ENCODE measurements at regions of chr13 and their contacts with region 1.

Region 1: DNA sequence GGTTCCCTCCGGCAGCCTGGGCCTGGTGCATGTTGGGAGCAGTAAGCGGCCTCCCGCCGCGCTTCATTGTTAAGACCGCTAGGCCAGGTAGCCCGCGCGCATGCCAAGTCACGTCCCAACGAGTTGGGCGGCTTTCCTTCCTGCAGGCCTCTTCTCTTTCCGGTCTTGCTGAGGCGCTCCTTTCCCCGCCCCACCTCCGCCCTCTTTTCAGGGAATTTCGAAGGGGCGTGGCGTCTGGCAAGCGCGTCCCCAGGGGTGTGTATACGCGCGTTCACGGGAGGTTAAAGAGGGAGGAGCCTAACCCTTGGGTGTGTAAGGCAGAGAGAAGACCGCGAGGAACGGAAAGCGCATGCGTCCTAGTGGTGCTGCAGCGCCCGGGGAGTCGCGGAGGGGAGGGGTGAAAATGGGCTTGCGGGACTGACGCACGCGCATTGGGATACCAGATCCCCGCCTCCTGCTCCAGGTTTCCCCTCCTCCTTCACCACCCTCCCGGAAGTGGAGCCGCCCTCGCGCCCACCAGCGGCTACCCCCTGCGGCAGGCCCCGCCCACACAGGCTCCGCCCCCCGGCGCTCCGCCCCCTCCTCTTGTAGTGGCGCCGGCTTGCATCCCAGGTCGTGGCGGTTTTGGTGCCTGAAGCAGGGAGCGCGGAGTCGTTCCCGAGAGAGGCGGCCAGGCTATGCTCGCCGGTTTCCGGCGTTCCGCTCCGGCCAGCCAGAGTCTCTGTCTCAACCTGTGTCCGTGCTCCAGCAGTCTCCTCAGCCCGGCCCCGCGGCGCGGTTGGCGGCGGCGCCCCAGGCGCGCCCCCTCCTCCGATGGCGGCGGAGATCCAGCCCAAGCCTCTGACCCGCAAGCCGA is at the start of gene WDFY2:
- DNase-seq: peak; percentile 99
- ATAC-seq: peak; percentile 86
- H3K4me3 ChIP-seq: peak within 1 kb of the TSS; percentile 95
- H3K27ac ChIP-seq: peak within 1 kb of the TSS; percentile 64
- H3K4me1 ChIP-seq: peaks cover 9% of the 10 kb centered on the region; the same call in 1 of the 2 replicates
- H3K27me3 ChIP-seq: no peaks in the 10 kb centered on the region
- CTCF ChIP-seq: peak in 1 of 3 experiments; percentile 24; a peak in 2 of 6 replicates
- EP300 ChIP-seq: no peak
- POLR2A ChIP-seq: peak; percentile 72
- RAD21 ChIP-seq: peak; percentile 3; the same call in 1 of the 2 replicates
- polyA plus RNA-seq, gene WDFY2: 2.1 to 2.7 TPM

Region 2: GRCh38 chr13:51047434-51048165 is 536.5 kb before region 1 on chr13:
- CTCF ChIA-PET with region 1: no interaction called
- POLR2A ChIA-PET with region 1: no interaction called
- RAD21 ChIA-PET with region 1: no interaction called
- SMC1A ChIA-PET with region 1: no interaction called
- in situ Hi-C with region 1: no loop called
- intact Hi-C with region 1: no loop called
- DNase-seq: no peak
- ATAC-seq: no peak
- H3K4me3 ChIP-seq: no peak overlapping the region
- H3K27ac ChIP-seq: no peak overlapping the region
- H3K4me1 ChIP-seq: no peaks in the 10 kb centered on the region
- H3K27me3 ChIP-seq: no peaks in the 10 kb centered on the region; a peak in 1 of 4 replicates
- CTCF ChIP-seq: peak in 2 of 3 experiments; percentile 8 to 9; a peak in 1 of 6 replicates
- EP300 ChIP-seq: no peak
- POLR2A ChIP-seq: no peak
- RAD21 ChIP-seq: 0 out of 2 replicates have a peak, but pooled peaks have one; percentile 5

Region 3: DNA sequence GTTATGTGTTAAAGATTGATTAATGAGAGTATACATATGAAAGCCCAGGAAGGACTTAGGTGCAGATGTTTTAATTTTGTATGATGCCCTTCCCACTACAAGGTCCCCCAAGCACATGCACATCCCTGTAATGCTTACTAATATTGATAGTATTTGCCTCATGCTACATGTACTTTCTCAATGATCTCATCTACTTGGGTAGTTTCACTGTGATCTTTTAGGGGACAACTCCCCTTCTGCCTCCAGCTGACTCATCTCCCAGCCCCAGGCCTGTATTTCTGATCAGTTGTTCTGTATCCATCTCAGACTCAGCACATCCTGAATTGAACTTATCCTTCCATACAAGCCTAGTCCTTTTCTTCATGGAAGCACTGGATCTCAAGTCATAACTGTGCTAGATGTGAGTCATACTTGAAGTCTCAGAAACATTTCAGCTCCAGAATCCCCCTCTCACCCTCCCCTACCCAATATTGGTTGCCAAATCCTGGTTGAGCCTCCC is 81.9 kb before region 1 on chr13:
- CTCF ChIA-PET with region 1: no interaction called
- POLR2A ChIA-PET with region 1: no interaction called
- RAD21 ChIA-PET with region 1: no interaction called
- SMC1A ChIA-PET with region 1: interaction called, 3 read pairs
- in situ Hi-C with region 1: no loop called
- intact Hi-C with region 1: loop called (anchors 2 kb)
- DNase-seq: peak; percentile 65
- ATAC-seq: peak; percentile 96
- H3K4me3 ChIP-seq: 0 out of 2 replicates have a peak overlapping the region, but pooled peaks have one; percentile 3
- H3K27ac ChIP-seq: peak overlapping the region; percentile 46; the same call in 1 of the 2 replicates
- H3K4me1 ChIP-seq: peaks cover 9% of the 10 kb centered on the region
- H3K27me3 ChIP-seq: no peaks in the 10 kb centered on the region
- CTCF ChIP-seq: no peak
- EP300 ChIP-seq: peak; percentile 72 to 78; a peak in 2 of 4 replicates
- POLR2A ChIP-seq: no peak
- RAD21 ChIP-seq: no peak

Region 4: GRCh38 chr13:51614350-51614786 is 30.3 kb after region 1 on chr13:
- CTCF ChIA-PET with region 1: interaction called, 5 read pairs
- POLR2A ChIA-PET with region 1: interaction called, 21 read pairs
- RAD21 ChIA-PET with region 1: interaction called, 16 read pairs
- SMC1A ChIA-PET with region 1: interaction called, 38 read pairs
- in situ Hi-C with region 1: no loop called
- intact Hi-C with region 1: no loop called
- DNase-seq: peak; percentile 56
- ATAC-seq: peak; percentile 71
- H3K4me3 ChIP-seq: peak overlapping the region; percentile 53
- H3K27ac ChIP-seq: peak overlapping the region; percentile 78
- H3K4me1 ChIP-seq: peaks cover 4% of the 10 kb centered on the region
- H3K27me3 ChIP-seq: no peaks in the 10 kb centered on the region
- CTCF ChIP-seq: no peak
- EP300 ChIP-seq: no peak
- POLR2A ChIP-seq: peak; percentile 83
- RAD21 ChIP-seq: 0 out of 2 replicates have a peak, but pooled peaks have one; percentile 1

Region 5: GRCh38 chr13:51659276-51660127 is 75.4 kb after region 1 on chr13:
- CTCF ChIA-PET with region 1: no interaction called
- POLR2A ChIA-PET with region 1: interaction called, 11 read pairs
- RAD21 ChIA-PET with region 1: interaction called, 3 read pairs
- SMC1A ChIA-PET with region 1: no interaction called
- in situ Hi-C with region 1: no loop called
- intact Hi-C with region 1: no loop called
- DNase-seq: no peak
- ATAC-seq: no peak
- H3K4me3 ChIP-seq: no peak overlapping the region
- H3K27ac ChIP-seq: no peak overlapping the region
- H3K4me1 ChIP-seq: no peaks in the 10 kb centered on the region
- H3K27me3 ChIP-seq: no peaks in the 10 kb centered on the region
- CTCF ChIP-seq: no peak
- EP300 ChIP-seq: no peak
- POLR2A ChIP-seq: no peak
- RAD21 ChIP-seq: no peak

Region 6: DNA sequence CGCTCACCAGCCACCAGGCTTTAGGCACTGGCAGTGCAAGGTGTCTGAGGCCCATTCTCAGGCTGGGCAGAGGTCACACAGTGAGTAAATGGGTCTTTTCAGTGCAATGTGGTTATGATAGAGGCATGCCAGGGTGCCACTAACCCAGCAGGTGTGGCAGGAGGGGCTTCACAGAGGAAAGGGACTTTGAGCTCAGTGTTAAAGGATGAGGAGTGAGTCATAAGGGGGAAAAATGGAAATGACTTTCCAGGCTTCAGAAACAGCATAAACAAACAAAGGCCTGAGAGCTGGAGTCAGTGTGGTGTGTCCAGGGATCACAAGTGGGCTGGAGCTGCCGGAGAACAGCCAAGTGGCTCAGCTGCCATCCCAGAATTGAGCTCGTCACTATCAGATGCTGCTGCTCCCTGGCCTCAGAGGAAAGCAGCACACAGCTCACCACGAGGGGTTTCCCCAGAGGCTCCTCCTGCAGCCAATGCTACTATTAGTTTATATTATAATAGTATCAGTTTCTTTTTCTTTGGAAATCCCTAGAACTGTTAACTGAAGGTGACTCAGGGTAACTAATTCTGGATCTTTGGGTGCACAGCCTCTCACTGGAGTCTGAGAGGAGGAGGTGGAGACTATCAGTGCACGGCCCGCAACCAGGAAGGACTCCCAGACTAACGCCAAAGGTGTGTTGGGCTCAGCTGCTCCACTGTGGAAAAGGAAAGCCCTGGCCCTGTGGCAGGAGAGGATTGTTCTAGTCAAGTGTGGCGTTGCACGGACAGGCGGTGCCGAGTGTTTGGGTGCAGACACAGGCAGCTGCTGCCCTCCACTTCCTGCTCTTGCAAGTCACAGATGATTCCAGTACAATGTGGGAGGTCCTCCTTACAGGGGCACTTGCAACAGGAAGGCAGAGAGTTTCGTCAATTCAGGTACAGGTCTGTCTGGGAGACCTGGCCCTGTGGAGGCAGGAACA is 180.4 kb after region 1 on chr13:
- CTCF ChIA-PET with region 1: interaction called, 9 read pairs
- POLR2A ChIA-PET with region 1: interaction called, 4 read pairs
- RAD21 ChIA-PET with region 1: interaction called, 29 read pairs
- SMC1A ChIA-PET with region 1: interaction called, 11 read pairs
- in situ Hi-C with region 1: no loop called
- intact Hi-C with region 1: loop called (anchors 1 kb)
- DNase-seq: peak; percentile 65
- ATAC-seq: peak; percentile 90
- H3K4me3 ChIP-seq: peak overlapping the region; percentile 49
- H3K27ac ChIP-seq: peak overlapping the region; percentile 87
- H3K4me1 ChIP-seq: peaks cover 21% of the 10 kb centered on the region
- H3K27me3 ChIP-seq: no peaks in the 10 kb centered on the region
- CTCF ChIP-seq: 0 out of 6 replicates have a peak, but pooled peaks of 1 of the 3 experiments have one; percentile 7
- EP300 ChIP-seq: no peak
- POLR2A ChIP-seq: peak; percentile 81
- RAD21 ChIP-seq: no peak

Measured in GM12878 (cell line).